Activated naive CD4-positive, alpha-beta T cell treated with anti-CD3 and anti-CD28 coated beads for 36 hours (primary cell): ENCODE measurements at regions of chr22 and their contacts with region 1.

Region 1: DNA sequence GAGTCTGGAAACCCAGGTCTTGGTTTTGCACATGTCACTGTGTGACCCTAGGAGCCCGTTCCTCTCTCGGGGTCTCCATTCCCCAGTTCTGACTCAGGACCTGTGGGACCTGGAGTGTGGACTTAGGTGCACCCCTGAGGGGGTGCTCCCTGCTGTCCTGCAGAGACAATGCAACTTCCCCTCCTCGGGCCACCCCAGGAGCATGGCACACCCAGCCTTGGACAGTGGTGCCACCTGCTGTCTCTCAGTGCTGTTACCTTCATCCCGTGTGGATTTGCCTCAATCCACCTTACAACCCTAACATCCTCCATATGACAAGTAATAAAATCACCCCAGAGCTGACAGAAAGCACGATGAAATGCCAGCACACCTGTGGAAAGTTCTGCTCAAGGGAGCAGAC is 27.5 kb upstream of the CRYBB3 start:
- DNase-seq: peak; percentile 65
- H3K4me3 Mint-ChIP-seq: no peak overlapping the region
- H3K27ac Mint-ChIP-seq: no peak overlapping the region
- H3K4me1 Mint-ChIP-seq: no peaks in the 10 kb centered on the region
- H3K27me3 Mint-ChIP-seq: no peaks in the 10 kb centered on the region

Region 2: DNA sequence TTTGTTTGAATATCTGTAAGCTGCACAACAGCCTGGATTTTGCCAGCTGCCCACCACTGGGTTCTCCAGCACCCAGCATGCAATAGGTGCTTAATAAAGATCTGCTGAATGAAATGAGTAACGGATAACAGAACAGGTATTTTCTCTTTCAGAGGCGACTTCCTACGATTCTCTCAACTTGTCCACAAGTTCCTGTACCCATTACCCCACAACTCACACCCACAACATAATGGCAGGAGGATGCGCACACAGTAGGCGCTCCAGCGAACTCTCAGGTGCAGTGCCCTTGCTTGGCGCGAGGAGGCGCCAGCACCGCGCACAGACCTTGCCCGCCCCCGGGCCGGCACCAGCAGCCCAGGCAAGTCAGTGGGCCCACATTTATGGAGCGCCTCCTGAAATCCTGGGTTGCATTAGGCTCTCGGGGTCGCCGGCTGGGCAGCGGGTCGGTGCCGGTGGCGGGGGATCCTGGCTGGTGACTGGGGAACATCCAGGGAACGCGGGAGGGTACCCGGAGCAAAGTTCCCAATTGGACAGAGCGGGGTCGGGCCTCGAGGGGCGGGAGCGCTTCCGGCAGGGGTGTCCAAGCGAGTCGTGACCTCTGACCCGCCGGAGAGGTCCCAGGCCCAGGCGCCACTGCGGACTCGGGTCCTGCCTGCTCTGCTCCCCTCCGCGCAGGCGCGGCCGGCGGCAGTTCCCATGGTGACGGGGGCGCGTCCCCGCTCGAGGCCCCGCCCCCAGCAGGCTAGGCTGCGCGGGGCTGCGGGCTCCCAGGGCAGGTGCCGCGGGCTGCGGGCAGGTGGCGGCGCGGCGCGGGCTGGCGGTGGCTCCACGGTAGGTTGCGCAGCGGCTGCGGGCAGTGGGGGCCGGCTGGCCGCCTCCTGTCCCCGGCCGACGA is 220.0 kb before region 1 on chr22 and contains the start of gene KIAA1671:
- CTCF ChIA-PET with region 1: no interaction called
- intact Hi-C with region 1: loop called (anchors 5 kb)
- DNase-seq: peak; percentile 87
- H3K4me3 Mint-ChIP-seq: peak within 1 kb of the TSS; percentile 76
- H3K27ac Mint-ChIP-seq: no peak within 1 kb of the TSS
- H3K4me1 Mint-ChIP-seq: peaks cover 5% of the 10 kb centered on the region
- H3K27me3 Mint-ChIP-seq: peaks cover 49% of the 10 kb centered on the region
- total RNA-seq, gene KIAA1671: 7.3 to 7.4 TPM

Region 3: GRCh38 chr22:25142102-25142501 is 30.1 kb before region 1 on chr22:
- CTCF ChIA-PET with region 1: no interaction called
- intact Hi-C with region 1: no loop called
- DNase-seq: no peak
- H3K4me3 Mint-ChIP-seq: no peak overlapping the region
- H3K27ac Mint-ChIP-seq: no peak overlapping the region
- H3K4me1 Mint-ChIP-seq: no peaks in the 10 kb centered on the region
- H3K27me3 Mint-ChIP-seq: no peaks in the 10 kb centered on the region

Region 4: GRCh38 chr22:25368271-25368670 is 196.1 kb after region 1 on chr22:
- CTCF ChIA-PET with region 1: no interaction called
- intact Hi-C with region 1: no loop called
- DNase-seq: no peak
- H3K4me3 Mint-ChIP-seq: no peak overlapping the region
- H3K27ac Mint-ChIP-seq: no peak overlapping the region
- H3K4me1 Mint-ChIP-seq: no peaks in the 10 kb centered on the region
- H3K27me3 Mint-ChIP-seq: no peaks in the 10 kb centered on the region